ENCODE measurements at regions of chr18 and their contacts with region 1.

Region 1: GRCh38 chr18:66749030-66749429 is 145.1 kb upstream of the CDH19 start:
- DNase-seq: no peak
- ATAC-seq: peak; percentile 82

Region 2: GRCh38 chr18:66377291-66377690 is 371.7 kb before region 1 on chr18:
- intact Hi-C with region 1: no loop called
- DNase-seq: no peak
- ATAC-seq: no peak

Region 3: GRCh38 chr18:66558773-66559172 is 190.3 kb before region 1 on chr18:
- intact Hi-C with region 1: loop called (anchors 5 kb)
- DNase-seq: no peak
- ATAC-seq: no peak

Region 4: DNA sequence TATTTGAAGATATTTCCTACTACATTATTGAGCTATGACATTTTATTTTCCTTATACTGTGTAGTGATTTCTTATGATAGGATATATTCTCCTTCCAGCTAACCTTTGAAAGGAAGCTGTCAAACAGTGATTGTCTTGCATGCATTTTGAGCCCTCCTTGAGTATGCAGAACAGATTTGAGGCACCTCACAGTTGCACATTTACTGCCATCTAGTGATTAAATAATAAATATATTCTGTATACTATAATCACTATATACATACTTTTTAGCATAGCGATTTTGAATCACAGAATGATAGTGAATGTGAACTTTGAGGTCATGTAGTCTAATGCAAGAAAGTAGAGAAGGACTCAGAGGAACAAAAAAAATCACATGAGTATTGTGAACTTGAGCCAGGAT is 123.2 kb after region 1 on chr18:
- intact Hi-C with region 1: no loop called
- DNase-seq: no peak
- ATAC-seq: no peak

Region 5: GRCh38 chr18:66990909-66991308 is 241.9 kb after region 1 on chr18:
- intact Hi-C with region 1: no loop called
- DNase-seq: no peak
- ATAC-seq: no peak

Measured in Right ventricle myocardium superior (tissue), 1 donor.